PC-9 (cell line): ENCODE measurements at regions of chr1 and their contacts with region 1.

Region 1: GRCh38 chr1:16243936-16244649 is 7.1 kb upstream of the CPLANE2 start:
- DNase-seq: peak; percentile 60 to 73
- H3K4me3 ChIP-seq: no peak overlapping the region
- H3K27ac ChIP-seq: no peak overlapping the region
- H3K4me1 ChIP-seq: peaks cover 15% of the 10 kb centered on the region
- H3K27me3 ChIP-seq: no peaks in the 10 kb centered on the region
- CTCF ChIP-seq: peak; percentile 81

Region 2: DNA sequence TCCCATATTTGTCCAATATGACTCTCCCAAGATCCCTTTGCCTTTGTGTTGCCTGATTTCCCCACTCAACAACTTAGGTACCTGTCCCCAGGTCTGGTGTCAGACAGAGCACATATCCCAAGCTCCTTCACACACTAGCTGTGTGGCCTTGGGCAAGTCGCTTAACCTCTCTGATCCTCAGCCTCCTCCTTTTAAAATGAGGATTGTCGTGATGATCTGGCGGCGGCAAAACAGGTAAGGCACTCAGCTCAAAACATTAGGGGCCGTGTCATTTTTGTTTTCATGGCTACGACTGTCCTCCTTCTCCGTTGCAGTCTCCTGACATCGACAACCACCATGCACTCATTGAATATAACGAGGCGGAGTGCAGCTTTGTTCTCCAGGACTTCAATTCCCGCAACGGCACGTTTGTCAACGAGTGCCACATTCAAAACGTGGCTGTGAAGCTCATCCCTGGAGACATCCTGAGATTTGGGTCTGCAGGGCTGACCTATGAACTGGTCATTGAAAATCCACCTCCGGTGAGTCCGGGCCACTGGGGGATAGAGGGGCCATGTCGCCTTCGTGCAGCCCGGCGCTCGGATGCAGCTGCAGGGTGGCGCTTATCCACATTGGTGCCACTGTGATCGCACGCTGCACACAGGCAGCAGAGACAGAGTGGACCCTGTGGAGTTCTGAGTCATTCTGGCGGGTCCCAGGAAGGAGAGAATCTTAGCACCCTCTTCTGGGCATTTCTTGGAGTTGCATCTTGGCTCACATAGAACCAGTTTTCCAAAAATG is 971.9 kb before region 1 on chr1:
- CTCF ChIA-PET with region 1: no interaction called
- POLR2A ChIA-PET with region 1: no interaction called
- intact Hi-C with region 1: no loop called
- DNase-seq: peak; percentile 54 to 65
- H3K4me3 ChIP-seq: no peak overlapping the region
- H3K27ac ChIP-seq: no peak overlapping the region
- H3K4me1 ChIP-seq: no peaks in the 10 kb centered on the region
- H3K27me3 ChIP-seq: no peaks in the 10 kb centered on the region
- CTCF ChIP-seq: peak; percentile 77

Region 3: GRCh38 chr1:16078925-16079656 is 165.0 kb before region 1 on chr1:
- CTCF ChIA-PET with region 1: interaction called, 9 read pairs
- POLR2A ChIA-PET with region 1: interaction called, 3 read pairs
- intact Hi-C with region 1: loop called (anchors 1 kb)
- DNase-seq: peak; percentile 67 to 82
- H3K4me3 ChIP-seq: no peak overlapping the region
- H3K27ac ChIP-seq: peak overlapping the region; percentile 20; the same call in 1 of the 2 replicates
- H3K4me1 ChIP-seq: peaks cover 63% of the 10 kb centered on the region
- H3K27me3 ChIP-seq: no peaks in the 10 kb centered on the region
- CTCF ChIP-seq: peak; percentile 92